Activated T-helper 1 cell treated with anti-CD3 and anti-CD28 coated beads, Interleukin-12 subunit alpha, Interleukin-12 subunit beta, Interleukin-2, Interleukin-4 antibody, amounts not matched to agents 30 ng/mL and 10 ng/mL and 1 ng/mL, durations not matched to agents 14 hours and 24 hours and 36 hours (primary cell): ENCODE measurements at regions of chr17 and their contacts with region 1.

Region 1: GRCh38 chr17:77247048-77247541 is 106.3 kb downstream of the SEC14L1 start:
- DNase-seq: peak; percentile 81
- H3K4me3 Mint-ChIP-seq: peak overlapping the region; percentile 58
- H3K27ac Mint-ChIP-seq: no peak overlapping the region
- H3K4me1 Mint-ChIP-seq: peaks cover 24% of the 10 kb centered on the region
- H3K27me3 Mint-ChIP-seq: peaks cover 28% of the 10 kb centered on the region

Region 2: GRCh38 chr17:77061669-77062068 is 185.4 kb before region 1 on chr17:
- intact Hi-C with region 1: no loop called
- DNase-seq: no peak
- H3K4me3 Mint-ChIP-seq: no peak overlapping the region
- H3K27ac Mint-ChIP-seq: no peak overlapping the region
- H3K4me1 Mint-ChIP-seq: no peaks in the 10 kb centered on the region
- H3K27me3 Mint-ChIP-seq: peaks cover 12% of the 10 kb centered on the region

Region 3: DNA sequence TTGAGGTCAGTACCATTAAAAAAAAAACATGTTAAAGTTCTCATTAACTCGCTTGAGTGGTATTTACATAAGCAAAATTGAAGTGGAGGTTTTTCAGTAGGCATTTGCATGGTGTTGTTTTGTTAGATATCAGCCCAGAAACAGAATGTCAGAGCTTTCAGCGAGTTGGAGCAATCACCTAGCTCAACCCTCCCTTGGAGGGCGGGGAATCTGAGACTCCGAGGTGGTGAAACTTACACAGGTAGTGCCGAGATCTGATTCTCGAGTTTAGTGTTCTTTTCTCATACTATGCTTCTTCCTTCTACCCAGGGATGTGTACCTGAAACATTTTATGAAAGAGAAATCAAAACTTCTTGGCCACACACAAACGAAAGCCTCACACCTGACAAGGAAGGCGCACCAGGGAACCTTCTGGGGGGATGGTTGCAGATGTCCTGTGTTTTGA is 99.7 kb before region 1 on chr17:
- intact Hi-C with region 1: no loop called
- DNase-seq: no peak
- H3K4me3 Mint-ChIP-seq: no peak overlapping the region
- H3K27ac Mint-ChIP-seq: no peak overlapping the region
- H3K4me1 Mint-ChIP-seq: peaks cover 64% of the 10 kb centered on the region
- H3K27me3 Mint-ChIP-seq: no peaks in the 10 kb centered on the region

Region 4: DNA sequence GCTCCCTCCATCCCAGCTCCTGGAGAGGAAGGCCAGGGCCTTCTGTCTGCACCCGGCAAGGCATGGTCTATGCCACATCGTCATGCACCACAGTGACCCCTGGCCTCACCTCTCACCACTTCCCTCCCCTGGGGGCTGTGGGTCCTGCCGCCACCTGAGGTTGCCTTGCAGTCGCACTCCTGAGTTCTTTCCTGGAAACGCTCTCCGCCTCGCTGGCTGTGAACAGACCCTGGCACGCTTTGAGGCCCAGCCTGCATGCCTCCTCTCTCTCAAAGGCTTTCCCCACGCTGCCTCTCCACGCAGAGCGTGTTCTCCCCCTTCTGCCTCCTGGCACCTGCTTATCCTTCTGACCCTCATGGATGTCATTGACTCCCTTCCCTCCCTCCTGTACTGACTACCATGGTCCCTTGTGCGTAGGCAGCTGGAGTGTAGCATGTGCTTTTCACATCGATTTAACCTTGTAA is 60.9 kb before region 1 on chr17:
- intact Hi-C with region 1: loop called (anchors 5 kb)
- DNase-seq: peak; percentile 33
- H3K4me3 Mint-ChIP-seq: no peak overlapping the region
- H3K27ac Mint-ChIP-seq: no peak overlapping the region
- H3K4me1 Mint-ChIP-seq: peaks cover 31% of the 10 kb centered on the region
- H3K27me3 Mint-ChIP-seq: no peaks in the 10 kb centered on the region